PC-3 (cell line): ENCODE measurements at regions of chr6 and their contacts with region 1.

Region 1: DNA sequence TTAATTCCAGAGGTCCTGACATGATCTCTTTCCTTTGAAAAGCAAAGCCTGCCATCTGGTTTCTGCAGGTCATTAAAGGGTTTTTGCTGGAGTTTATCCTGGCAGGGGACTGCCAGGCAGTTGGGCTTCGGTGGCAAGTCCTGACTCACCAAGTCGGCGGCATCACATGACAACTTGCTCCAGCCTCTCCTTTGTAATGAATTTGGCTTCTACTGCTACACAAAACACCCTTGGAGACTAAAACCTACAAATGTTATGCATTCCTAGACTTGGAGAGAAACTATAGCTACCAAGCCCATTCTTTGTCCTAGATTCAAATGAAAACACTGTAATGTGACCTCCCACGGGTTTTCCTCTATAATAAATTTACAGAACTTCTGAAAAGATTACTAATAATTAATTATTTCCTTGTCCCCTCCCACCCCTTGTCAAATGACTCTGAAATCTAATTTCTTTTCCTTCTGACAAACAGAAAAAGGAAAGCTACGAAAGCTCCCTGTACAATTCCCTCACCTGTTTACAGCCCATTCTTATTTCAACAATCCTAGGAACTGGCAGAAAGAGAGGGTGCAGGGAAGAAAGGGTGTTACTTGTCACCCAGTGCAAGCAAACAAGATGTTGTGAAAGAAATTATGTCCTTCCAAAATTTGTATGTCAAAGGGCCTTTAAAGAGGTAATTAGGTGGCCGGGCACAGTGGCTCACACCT is 62.9 kb downstream of the QRSL1 start:
- DNase-seq: peak; percentile 53
- ATAC-seq: peak; percentile 86
- H3K4me3 ChIP-seq: no peak overlapping the region
- H3K27ac ChIP-seq: no peak overlapping the region
- H3K4me1 ChIP-seq: peaks cover 25% of the 10 kb centered on the region
- H3K27me3 ChIP-seq: no peaks in the 10 kb centered on the region
- CTCF ChIP-seq: no peak

Region 2: DNA sequence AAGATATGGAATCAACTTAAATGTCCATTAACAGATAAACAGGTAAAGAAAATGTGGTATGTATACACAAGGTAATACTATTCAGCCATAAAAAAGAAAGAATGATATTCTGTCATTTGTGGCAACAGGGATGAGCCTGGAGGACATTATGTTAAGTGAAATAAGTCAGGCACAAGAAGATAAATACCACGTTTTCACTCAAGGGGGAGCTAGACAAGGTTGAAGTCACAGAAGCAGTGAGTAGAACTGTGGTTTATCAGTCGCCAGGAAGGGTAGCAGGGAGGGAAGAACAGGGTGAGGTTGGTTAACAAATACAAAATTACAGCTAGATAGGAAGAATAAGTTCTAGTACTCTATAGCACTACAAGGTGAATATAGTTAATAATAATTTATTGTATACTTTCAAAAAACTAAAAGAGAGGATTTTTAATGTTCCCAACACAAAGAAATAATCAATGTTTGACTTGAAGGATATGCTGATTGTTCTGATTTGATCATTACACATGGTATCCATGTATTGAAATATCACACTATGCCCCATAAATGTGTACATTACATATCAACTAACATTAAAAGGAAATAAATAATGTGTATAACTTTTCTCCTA is 84.1 kb before region 1 on chr6:
- CTCF ChIA-PET with region 1: no interaction called
- POLR2A ChIA-PET with region 1: no interaction called
- intact Hi-C with region 1: loop called (anchors 1 kb)
- DNase-seq: peak; percentile 76
- ATAC-seq: peak; percentile 70
- H3K4me3 ChIP-seq: no peak overlapping the region
- H3K27ac ChIP-seq: no peak overlapping the region
- H3K4me1 ChIP-seq: no peaks in the 10 kb centered on the region
- H3K27me3 ChIP-seq: no peaks in the 10 kb centered on the region
- CTCF ChIP-seq: peak; percentile 68

Region 3: GRCh38 chr6:106658469-106658868 is 33.8 kb before region 1 on chr6:
- CTCF ChIA-PET with region 1: no interaction called
- POLR2A ChIA-PET with region 1: no interaction called
- intact Hi-C with region 1: no loop called
- DNase-seq: no peak
- ATAC-seq: no peak
- H3K4me3 ChIP-seq: no peak overlapping the region
- H3K27ac ChIP-seq: no peak overlapping the region
- H3K4me1 ChIP-seq: no peaks in the 10 kb centered on the region
- H3K27me3 ChIP-seq: no peaks in the 10 kb centered on the region
- CTCF ChIP-seq: no peak

Region 4: GRCh38 chr6:106677282-106677681 is 15.0 kb before region 1 on chr6:
- CTCF ChIA-PET with region 1: no interaction called
- POLR2A ChIA-PET with region 1: no interaction called
- intact Hi-C with region 1: no loop called
- DNase-seq: no peak
- ATAC-seq: no peak
- H3K4me3 ChIP-seq: no peak overlapping the region
- H3K27ac ChIP-seq: no peak overlapping the region
- H3K4me1 ChIP-seq: no peaks in the 10 kb centered on the region
- H3K27me3 ChIP-seq: no peaks in the 10 kb centered on the region
- CTCF ChIP-seq: no peak

Region 5: GRCh38 chr6:106746660-106747059 is 54.4 kb after region 1 on chr6:
- CTCF ChIA-PET with region 1: interaction called, 3 read pairs
- POLR2A ChIA-PET with region 1: no interaction called
- intact Hi-C with region 1: loop called (anchors 2 kb)
- DNase-seq: peak; percentile 93
- ATAC-seq: peak; percentile 69
- H3K4me3 ChIP-seq: peak overlapping the region; percentile 44; the same call in 1 of the 2 replicates
- H3K27ac ChIP-seq: peak overlapping the region; percentile 99
- H3K4me1 ChIP-seq: peaks cover 59% of the 10 kb centered on the region
- H3K27me3 ChIP-seq: no peaks in the 10 kb centered on the region
- CTCF ChIP-seq: no peak